Endothelial cell of umbilical vein (primary cell): ENCODE measurements at regions of chr6 and their contacts with region 1.

Region 1: GRCh38 chr6:105184921-105185320 is 5.1 kb upstream of the POPDC3 start:
- DNase-seq: peak; percentile 67
- H3K4me3 ChIP-seq: no peak overlapping the region
- H3K27ac ChIP-seq: peak overlapping the region; percentile 53
- H3K4me1 ChIP-seq: peaks cover 29% of the 10 kb centered on the region
- H3K27me3 ChIP-seq: no peaks in the 10 kb centered on the region
- CTCF ChIP-seq: no peak
- POLR2A ChIP-seq: no peak

Region 2: DNA sequence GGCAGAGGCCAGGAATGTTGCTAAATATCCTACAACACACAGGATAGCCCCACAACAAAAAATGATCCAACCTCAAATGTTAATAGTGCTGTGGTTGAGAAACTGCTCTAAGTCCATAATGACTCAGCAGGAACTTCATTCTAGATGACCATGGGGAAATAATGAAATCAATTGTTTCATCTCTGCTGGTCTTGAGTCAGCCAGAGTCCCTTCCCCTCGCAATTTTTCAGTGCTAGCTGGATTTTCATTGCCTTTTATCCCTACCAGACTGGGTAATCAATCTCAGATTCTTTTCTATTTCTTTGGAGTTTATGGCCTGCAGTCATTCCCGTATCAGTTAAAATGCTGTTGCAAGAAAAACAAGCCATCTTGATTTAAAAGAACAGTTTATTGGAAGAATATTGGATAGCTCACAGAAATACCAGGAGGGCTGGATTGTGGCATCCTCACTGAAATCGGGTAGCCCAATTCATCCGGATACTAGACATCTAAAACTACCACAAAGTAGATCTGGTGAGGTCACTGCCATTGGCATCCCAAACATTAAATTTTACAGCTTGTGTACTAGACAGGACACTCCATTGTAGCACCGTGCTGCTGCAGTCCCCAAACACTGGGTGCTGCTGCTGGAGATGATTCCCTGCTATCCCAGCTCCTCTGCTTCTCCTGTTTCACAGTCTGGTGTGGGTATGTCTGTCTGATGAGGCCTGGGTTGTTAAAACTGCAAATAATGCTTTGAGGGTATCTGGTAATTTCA is 25.2 kb after region 1 on chr6:
- CTCF ChIA-PET with region 1: interaction called, 9 read pairs
- POLR2A ChIA-PET with region 1: no interaction called
- dilution Hi-C with region 1: no loop called
- intact Hi-C with region 1: loop called (anchors 2 kb)
- DNase-seq: peak; percentile 56
- H3K4me3 ChIP-seq: no peak overlapping the region
- H3K27ac ChIP-seq: peak overlapping the region; percentile 50
- H3K4me1 ChIP-seq: peaks cover 28% of the 10 kb centered on the region
- H3K27me3 ChIP-seq: no peaks in the 10 kb centered on the region
- CTCF ChIP-seq: no peak
- POLR2A ChIP-seq: no peak